Activated CD8-positive, alpha-beta T cell treated with anti-CD3 and anti-CD28 coated beads for 36 hours (primary cell): ENCODE measurements at regions of chr7 and their contacts with region 1.

Region 1: DNA sequence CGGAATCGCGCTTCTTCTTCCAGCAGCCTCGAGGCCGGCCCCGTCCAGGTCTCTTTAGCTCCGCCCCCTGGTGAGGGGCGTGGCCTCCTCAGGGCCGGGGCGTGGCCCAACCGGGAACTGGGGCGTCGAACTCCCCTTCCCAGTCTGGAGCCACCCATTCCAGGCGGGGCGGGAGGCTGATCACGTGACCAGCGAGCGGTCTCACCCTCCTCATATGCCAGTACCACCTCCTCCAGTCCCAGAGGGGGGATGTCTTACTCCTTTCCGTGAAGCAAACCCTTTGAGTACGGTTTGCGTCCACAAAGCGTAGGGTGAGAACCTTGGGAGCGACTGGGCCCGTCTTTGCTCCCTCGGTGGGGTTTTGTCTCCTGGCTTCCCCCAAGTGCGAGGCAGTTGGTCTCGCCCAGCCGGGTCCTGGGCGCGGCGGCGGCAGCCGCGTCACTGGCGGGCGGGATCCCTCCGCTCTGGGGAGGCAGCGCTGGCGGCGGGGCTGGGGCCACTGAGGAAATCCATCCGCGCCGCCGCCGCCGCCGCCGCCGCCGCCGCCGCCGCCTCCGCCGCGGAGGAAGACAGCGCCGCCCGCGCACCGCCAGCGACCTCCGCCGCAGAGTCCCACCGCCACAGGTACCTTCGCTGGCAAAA is at the start of gene GNB2:
- DNase-seq: peak; percentile 99
- ATAC-seq: peak; percentile 75
- H3K4me3 Mint-ChIP-seq: peak within 1 kb of the TSS; percentile 94
- H3K27ac Mint-ChIP-seq: peak within 1 kb of the TSS; percentile 95
- H3K4me1 Mint-ChIP-seq: peaks cover 11% of the 10 kb centered on the region
- H3K27me3 Mint-ChIP-seq: no peaks in the 10 kb centered on the region
- CTCF ChIP-seq: no peak
- total RNA-seq, gene GNB2: 192 TPM

Region 2: DNA sequence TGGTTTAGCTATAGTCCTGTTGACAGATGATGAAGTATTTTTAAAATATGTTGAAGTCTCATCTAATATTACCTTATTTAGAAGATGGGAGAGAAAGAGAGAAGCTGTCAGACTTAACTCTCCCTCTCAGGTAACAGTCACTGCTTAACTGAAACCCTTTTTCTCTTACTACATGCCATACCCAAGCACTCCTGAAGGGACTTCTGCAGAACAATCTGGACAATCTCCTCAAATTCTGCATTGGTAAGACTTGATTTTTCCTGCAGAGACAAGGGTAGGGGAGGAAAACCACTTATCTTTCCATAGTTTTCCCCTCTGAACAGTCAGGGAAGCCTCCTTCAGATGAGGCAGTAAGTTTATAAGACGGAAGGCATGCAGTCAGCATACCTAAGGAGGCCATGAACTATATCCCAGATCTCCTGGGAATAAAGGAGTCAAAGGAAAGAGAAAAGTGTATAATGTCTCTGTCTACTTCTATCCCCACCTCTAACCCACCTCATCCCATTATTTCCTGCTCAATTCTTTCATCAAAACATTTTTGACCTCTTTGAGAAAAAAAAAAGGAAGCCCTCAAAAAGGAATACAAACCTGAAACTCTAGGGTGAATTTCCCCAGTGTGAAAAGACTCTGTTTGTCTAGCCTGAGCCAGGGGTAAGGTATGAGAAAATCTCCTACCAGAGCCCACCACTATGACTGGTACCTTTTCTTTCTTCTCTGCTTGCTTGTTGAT is 254.3 kb before region 1 on chr7:
- CTCF ChIA-PET with region 1: no interaction called
- POLR2A ChIA-PET with region 1: no interaction called
- intact Hi-C with region 1: no loop called
- DNase-seq: no peak
- ATAC-seq: no peak
- H3K4me3 Mint-ChIP-seq: no peak overlapping the region
- H3K27ac Mint-ChIP-seq: no peak overlapping the region
- H3K4me1 Mint-ChIP-seq: peaks cover 4% of the 10 kb centered on the region
- H3K27me3 Mint-ChIP-seq: no peaks in the 10 kb centered on the region
- CTCF ChIP-seq: no peak

Region 3: DNA sequence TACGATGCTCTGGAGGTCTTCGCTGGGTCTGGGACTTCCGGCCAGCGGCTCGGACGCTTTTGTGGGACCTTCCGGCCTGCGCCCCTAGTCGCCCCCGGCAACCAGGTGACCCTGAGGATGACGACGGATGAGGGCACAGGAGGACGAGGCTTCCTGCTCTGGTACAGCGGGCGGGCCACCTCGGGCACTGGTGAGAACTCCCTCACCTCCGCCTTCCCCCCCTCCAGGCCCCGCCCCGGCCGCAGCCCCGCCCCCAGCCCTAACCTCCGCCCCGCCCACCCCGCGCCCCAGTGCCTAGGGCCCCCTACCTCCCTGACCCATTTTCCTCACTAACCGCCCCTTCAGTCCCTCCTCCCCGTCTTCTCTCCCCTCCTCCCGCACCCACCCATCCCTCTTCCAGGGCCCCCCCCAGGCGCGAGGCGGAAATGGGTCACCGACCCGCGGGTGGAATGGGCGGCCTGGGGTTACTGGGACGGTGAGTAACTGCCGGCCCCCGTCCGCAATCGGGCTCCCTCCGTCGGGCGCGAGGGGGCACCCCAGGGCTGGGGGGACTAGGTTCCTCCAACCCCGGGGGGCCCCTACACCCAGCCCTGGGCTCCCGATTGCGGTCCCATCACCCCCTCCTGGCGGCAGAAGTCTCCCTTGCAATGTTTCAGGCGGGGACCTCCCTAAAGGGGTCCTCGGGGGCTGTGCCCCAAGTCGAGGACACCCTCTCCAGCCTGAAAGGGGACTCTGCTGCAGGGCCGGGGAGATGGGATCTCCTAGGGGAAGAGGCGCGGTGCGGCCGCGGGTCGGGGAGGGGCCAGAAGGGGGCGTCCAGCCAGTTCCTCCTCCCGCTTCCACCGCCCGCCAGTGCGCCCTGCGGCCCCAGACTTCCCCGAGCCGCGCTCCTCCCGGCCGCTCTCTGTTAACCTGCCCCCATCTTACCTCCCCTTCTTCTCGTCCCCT is 69.1 kb before region 1 on chr7:
- CTCF ChIA-PET with region 1: interaction called, 3 read pairs
- POLR2A ChIA-PET with region 1: interaction called, 3 read pairs
- intact Hi-C with region 1: loop called (anchors 10 kb)
- DNase-seq: peak; percentile 87
- ATAC-seq: peak; percentile 81
- H3K4me3 Mint-ChIP-seq: peak overlapping the region; percentile 78
- H3K27ac Mint-ChIP-seq: peak overlapping the region; percentile 82
- H3K4me1 Mint-ChIP-seq: peaks cover 19% of the 10 kb centered on the region
- H3K27me3 Mint-ChIP-seq: peaks cover 3% of the 10 kb centered on the region
- CTCF ChIP-seq: peak; percentile 72

Region 4: GRCh38 chr7:100819551-100819950 is 146.1 kb after region 1 on chr7:
- CTCF ChIA-PET with region 1: no interaction called
- POLR2A ChIA-PET with region 1: no interaction called
- intact Hi-C with region 1: no loop called
- DNase-seq: no peak
- ATAC-seq: no peak
- H3K4me3 Mint-ChIP-seq: no peak overlapping the region
- H3K27ac Mint-ChIP-seq: no peak overlapping the region
- H3K4me1 Mint-ChIP-seq: no peaks in the 10 kb centered on the region
- H3K27me3 Mint-ChIP-seq: peaks cover 1% of the 10 kb centered on the region
- CTCF ChIP-seq: no peak